Sciatic nerve (tissue), 2 donors: ENCODE measurements at regions of chr15 and their contacts with region 1.

Region 1: DNA sequence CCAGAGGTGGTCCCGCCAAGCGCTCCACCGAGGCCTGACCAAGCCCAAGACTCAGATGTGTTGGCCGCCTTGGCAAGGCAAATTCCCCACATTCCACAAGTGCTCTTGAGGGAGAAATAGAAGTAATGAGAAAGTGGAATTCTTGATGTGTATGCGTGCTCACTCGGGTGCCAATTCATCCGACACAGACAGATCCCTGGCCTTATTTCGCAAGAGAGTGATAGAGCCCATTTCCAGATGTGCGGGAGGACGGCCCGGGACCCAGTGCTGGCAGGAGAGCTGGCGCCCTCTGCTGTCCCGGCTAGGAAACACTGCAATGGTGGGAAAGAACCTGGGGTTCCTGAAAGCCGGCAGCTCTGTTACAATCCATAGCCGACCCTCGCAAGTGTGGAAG is 76.0 kb downstream of the HMG20A start:
- DNase-seq: peak; percentile 93
- ATAC-seq: peak; percentile 95

Region 2: GRCh38 chr15:77118882-77119321 is 377.8 kb before region 1 on chr15:
- intact Hi-C with region 1: loop called (anchors 10 kb)
- DNase-seq: no peak
- ATAC-seq: peak; percentile 88

Region 3: DNA sequence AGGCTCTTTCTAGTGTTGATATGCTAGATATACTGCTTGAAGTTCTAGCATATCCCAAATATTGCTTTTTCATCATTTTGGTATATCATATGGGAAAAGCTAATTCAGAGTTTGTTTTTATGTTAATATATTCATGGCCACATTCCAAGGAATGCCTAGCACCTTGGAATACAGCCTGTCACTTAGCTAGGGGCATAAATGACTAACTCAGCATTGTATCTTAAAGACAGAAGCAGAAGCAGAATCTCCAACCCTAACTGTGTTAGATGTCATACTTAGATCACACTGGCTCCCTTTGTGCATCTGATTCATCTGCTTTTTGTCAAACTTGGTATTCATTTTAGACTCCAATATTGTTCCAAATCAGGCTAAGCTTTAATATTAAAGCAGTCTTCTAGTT is 295.0 kb before region 1 on chr15:
- intact Hi-C with region 1: no loop called
- DNase-seq: no peak
- ATAC-seq: no peak

Region 4: GRCh38 chr15:78565097-78565951 is 1068.6 kb after region 1 on chr15 and contains the start of gene CHRNA5:
- intact Hi-C with region 1: no loop called
- DNase-seq: peak; percentile 88
- ATAC-seq: peak; percentile 94
- total RNA-seq, gene CHRNA5: 1.8 TPM